Astrocyte of the spinal cord (primary cell): ENCODE measurements at regions of chr4 and their contacts with region 1.

Region 1: GRCh38 chr4:73653695-73654106 is 33.5 kb upstream of the RASSF6 start:
- DNase-seq: peak; percentile 74
- H3K4me3 ChIP-seq: no peak overlapping the region
- CTCF ChIP-seq: peak; percentile 38

Region 2: GRCh38 chr4:74133786-74134499 is 480.2 kb after region 1 on chr4:
- in situ Hi-C with region 1: loop called (anchors 25 kb)
- DNase-seq: peak; percentile 91
- H3K4me3 ChIP-seq: no peak overlapping the region
- CTCF ChIP-seq: peak; percentile 81